ENCODE measurements at regions of chr3 and their contacts with region 1.

Region 1: DNA sequence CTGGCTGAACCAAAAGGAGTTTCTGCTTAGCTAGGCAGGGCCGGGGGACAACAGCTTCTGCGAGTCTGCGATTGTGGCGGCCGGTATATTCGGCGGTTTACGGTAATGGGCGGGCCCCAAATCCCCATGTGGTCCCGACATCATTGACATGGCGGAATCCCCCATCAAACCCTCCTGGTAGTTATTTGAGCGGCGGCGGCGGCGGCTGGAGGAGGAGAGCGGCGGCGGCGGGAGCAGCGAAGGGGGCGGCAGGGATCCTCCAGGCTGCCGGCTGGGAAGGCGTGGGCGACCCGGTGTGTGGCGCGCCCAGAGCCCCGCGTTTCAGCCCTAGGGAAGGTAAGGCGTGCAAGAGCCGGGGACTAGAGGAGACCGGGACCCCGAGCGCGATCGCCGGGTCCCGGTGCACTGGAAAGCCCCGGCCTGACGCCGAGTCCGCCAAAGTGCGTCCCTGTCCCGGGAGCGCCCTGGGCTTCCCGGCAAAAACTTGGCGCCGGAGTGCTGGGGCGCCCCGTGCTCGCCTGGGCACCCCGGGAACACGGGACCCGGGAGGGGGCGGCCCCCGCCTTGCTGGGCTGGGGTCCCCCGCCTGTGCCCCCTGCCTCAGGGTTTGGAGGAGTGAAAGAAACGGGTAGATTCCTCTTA is at the start of gene FNDC3B:
- DNase-seq: peak; percentile 92 to 95 (median 94)
- ATAC-seq: peak; percentile 90
- H3K4me3 ChIP-seq: peak within 1 kb of the TSS; percentile 99
- H3K27ac ChIP-seq: peak within 1 kb of the TSS; percentile 98 to 99
- H3K4me1 ChIP-seq: peaks cover 8 to 47% of the 10 kb centered on the region in 2 donors
- H3K27me3 ChIP-seq: no peaks in the 10 kb centered on the region
- CTCF ChIP-seq: no peak
- polyA plus RNA-seq, gene FNDC3B: 35.2 to 46.3 (median 39.9) TPM

Region 2: GRCh38 chr3:172129870-172130683 is 90.5 kb after region 1 on chr3:
- intact Hi-C with region 1: loop called in 1 of 2 experiments (anchors 5 kb)
- DNase-seq: peak in 3 of 4 donors; percentile 63 to 94 (median 93)
- ATAC-seq: peak; percentile 81
- H3K4me3 ChIP-seq: no peak overlapping the region
- H3K27ac ChIP-seq: peak overlapping the region; percentile 87 to 98
- H3K4me1 ChIP-seq: peaks cover 41 to 99% of the 10 kb centered on the region in 2 donors
- H3K27me3 ChIP-seq: no peaks in the 10 kb centered on the region
- CTCF ChIP-seq: no peak